CD8-positive, alpha-beta T cell (primary cell): ENCODE measurements at regions of chr10 and their contacts with region 1.

Region 1: GRCh38 chr10:132477398-132478340 is 59.9 kb upstream of the INPP5A start:
- DNase-seq: no peak
- ATAC-seq: no peak
- H3K4me3 ChIP-seq: no peak overlapping the region
- H3K4me3 Mint-ChIP-seq: no peak overlapping the region
- H3K27ac ChIP-seq: no peak overlapping the region
- H3K27ac Mint-ChIP-seq: no peak overlapping the region
- H3K4me1 ChIP-seq: no peaks in the 10 kb centered on the region
- H3K4me1 Mint-ChIP-seq: no peaks in the 10 kb centered on the region
- H3K27me3 ChIP-seq: peaks cover 0 to 3% of the 10 kb centered on the region in 2 experiments
- H3K27me3 Mint-ChIP-seq: peaks cover 10% of the 10 kb centered on the region
- CTCF ChIP-seq: no peak

Region 2: DNA sequence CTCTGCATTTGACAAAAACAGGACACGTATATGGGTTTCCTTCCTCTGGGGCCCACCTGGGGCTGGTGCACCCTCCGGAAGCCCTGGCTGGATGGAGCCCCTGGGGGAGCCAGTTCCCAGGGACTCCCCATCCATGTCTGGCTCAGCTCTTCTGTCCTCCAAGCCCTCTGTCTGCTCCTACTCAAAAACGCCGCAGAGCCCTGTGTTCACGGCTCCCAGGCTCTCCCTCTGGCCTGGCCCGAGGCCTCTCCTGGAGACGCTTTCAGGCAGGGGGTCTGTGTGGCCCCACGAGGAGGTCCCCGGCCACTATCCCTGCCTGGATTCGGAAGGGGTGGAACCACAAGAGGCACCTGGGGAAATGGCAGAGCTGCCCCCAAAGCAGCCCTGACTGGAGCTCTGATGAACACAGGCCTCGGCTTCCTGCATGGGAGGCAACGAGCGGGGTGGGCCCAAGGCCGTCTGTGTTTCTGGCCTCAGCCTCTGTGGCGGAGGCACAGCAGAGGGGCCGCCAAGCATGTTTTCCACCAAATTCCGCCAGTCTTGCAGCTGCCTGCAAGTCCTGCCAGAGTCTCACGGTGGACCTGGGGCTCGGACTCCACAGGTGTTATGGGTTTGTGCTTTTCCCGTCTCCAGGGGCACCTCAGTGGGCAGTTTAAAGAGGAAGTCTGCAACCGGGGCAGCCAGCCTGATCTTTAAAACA is 37.3 kb after region 1 on chr10:
- CTCF ChIA-PET with region 1: no interaction called
- POLR2A ChIA-PET with region 1: no interaction called
- intact Hi-C with region 1: loop called in 1 of 2 experiments (anchors 5 kb)
- DNase-seq: no peak
- ATAC-seq: no peak
- H3K4me3 ChIP-seq: no peak overlapping the region
- H3K4me3 Mint-ChIP-seq: no peak overlapping the region
- H3K27ac ChIP-seq: no peak overlapping the region
- H3K27ac Mint-ChIP-seq: peak overlapping the region; percentile 22
- H3K4me1 ChIP-seq: no peaks in the 10 kb centered on the region
- H3K4me1 Mint-ChIP-seq: peaks cover 2% of the 10 kb centered on the region
- H3K27me3 ChIP-seq: no peaks in the 10 kb centered on the region
- H3K27me3 Mint-ChIP-seq: peaks cover 2% of the 10 kb centered on the region
- CTCF ChIP-seq: no peak